ENCODE measurements at regions of chr12 and their contacts with region 1.

Region 1: GRCh38 chr12:121499929-121500793 is 80.7 kb downstream of the KDM2B start:
- DNase-seq: peak in 1 of 2 experiments; percentile 88
- H3K4me3 ChIP-seq: no peak overlapping the region
- H3K27ac ChIP-seq: 0 out of 2 replicates have a peak overlapping the region, but pooled peaks have one; percentile 16
- H3K4me1 ChIP-seq: no peaks in the 10 kb centered on the region
- H3K27me3 ChIP-seq: no peaks in the 10 kb centered on the region
- CTCF ChIP-seq: peak; percentile 63 to 84 (median 80)
- EP300 ChIP-seq: no peak
- POLR2A ChIP-seq: no peak
- RAD21 ChIP-seq: peak; percentile 49 to 63

Region 2: DNA sequence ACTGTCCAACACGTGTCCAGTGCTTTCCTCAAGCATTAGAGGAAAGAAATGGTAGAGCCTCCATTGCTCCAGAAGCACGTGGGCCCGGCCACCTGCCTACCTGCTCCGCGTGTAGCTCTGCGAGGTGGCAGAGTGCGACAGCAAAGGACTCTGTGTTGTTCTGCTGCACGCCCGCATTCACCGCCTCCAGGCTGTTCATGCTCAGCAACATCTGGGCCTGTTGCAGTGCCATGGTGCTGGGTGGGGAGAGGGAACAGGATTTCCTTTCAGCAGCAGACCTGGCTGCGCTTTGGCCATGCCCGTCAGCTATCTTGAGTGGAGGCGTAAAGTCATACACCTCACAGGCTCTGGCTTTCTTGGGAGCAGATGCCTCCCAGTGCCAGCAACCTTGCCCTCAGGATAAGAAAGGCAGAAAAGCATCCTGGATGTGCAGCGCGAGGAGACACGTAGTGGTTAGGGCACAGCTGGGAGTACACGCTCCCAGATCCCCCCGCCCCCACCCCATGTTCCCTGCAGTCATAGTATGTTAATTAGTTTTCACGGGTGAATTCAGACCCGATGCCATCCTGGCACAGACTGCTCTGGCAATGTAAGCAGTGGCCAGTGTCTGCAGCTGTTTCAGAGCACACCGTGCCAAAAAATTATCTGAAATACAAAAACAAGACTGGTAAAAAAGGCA is 173.0 kb before region 1 on chr12:
- CTCF ChIA-PET with region 1: no interaction called
- POLR2A ChIA-PET with region 1: no interaction called
- DNase-seq: no peak
- H3K4me3 ChIP-seq: no peak overlapping the region
- H3K27ac ChIP-seq: no peak overlapping the region
- H3K4me1 ChIP-seq: no peaks in the 10 kb centered on the region
- H3K27me3 ChIP-seq: no peaks in the 10 kb centered on the region
- CTCF ChIP-seq: no peak
- EP300 ChIP-seq: no peak
- POLR2A ChIP-seq: no peak
- RAD21 ChIP-seq: no peak

Region 3: GRCh38 chr12:121476477-121476876 is 23.7 kb before region 1 on chr12:
- CTCF ChIA-PET with region 1: interaction called, 35 read pairs
- POLR2A ChIA-PET with region 1: no interaction called
- DNase-seq: no peak
- H3K4me3 ChIP-seq: no peak overlapping the region
- H3K27ac ChIP-seq: no peak overlapping the region
- H3K4me1 ChIP-seq: peaks cover 0 to 3% (median 2%) of the 10 kb centered on the region in 4 experiments; a peak in 1 of 7 replicates
- H3K27me3 ChIP-seq: no peaks in the 10 kb centered on the region
- CTCF ChIP-seq: no peak
- EP300 ChIP-seq: no peak
- POLR2A ChIP-seq: no peak
- RAD21 ChIP-seq: no peak

Region 4: GRCh38 chr12:121513464-121514183 is 13.5 kb after region 1 on chr12:
- CTCF ChIA-PET with region 1: interaction called, 20 read pairs
- POLR2A ChIA-PET with region 1: interaction called, 5 read pairs
- DNase-seq: peak; percentile 38 to 78
- H3K4me3 ChIP-seq: no peak overlapping the region
- H3K27ac ChIP-seq: no peak overlapping the region
- H3K4me1 ChIP-seq: peaks cover 0 to 3% (median 1%) of the 10 kb centered on the region in 4 experiments; a peak in 4 of 7 replicates
- H3K27me3 ChIP-seq: no peaks in the 10 kb centered on the region
- CTCF ChIP-seq: peak in 1 of 3 experiments; percentile 21; a peak in 1 of 4 replicates
- EP300 ChIP-seq: no peak
- POLR2A ChIP-seq: no peak
- RAD21 ChIP-seq: no peak; a peak in 1 of 4 replicates

Region 5: GRCh38 chr12:121536899-121537813 is 37.0 kb after region 1 on chr12:
- CTCF ChIA-PET with region 1: interaction called, 12 read pairs
- POLR2A ChIA-PET with region 1: interaction called, 7 read pairs
- DNase-seq: peak in 1 of 2 experiments; percentile 78
- H3K4me3 ChIP-seq: peak overlapping the region; percentile 0 to 59 (median 45); a peak in 7 of 8 replicates
- H3K27ac ChIP-seq: no peak overlapping the region
- H3K4me1 ChIP-seq: peaks cover 7 to 32% (median 25%) of the 10 kb centered on the region in 4 experiments
- H3K27me3 ChIP-seq: peaks cover 0 to 9% (median 0%) of the 10 kb centered on the region in 4 experiments; a peak in 3 of 7 replicates
- CTCF ChIP-seq: no peak
- EP300 ChIP-seq: no peak
- POLR2A ChIP-seq: no peak
- RAD21 ChIP-seq: no peak